Dorsolateral prefrontal cortex (tissue), 120 donors: ENCODE measurements at regions of chr21 and their contacts with region 1.

Region 1: GRCh38 chr21:28025111-28025510 is 967.6 kb downstream of the LTN1 start:
- DNase-seq: no peak
- H3K4me3 ChIP-seq: no peak overlapping the region
- H3K27ac ChIP-seq: no peak overlapping the region
- H3K27me3 ChIP-seq: no peaks in the 10 kb centered on the region
- CTCF ChIP-seq: no peak

Region 2: GRCh38 chr21:27813750-27814149 is 211.4 kb before region 1 on chr21:
- intact Hi-C with region 1: loop called in 1 of 2 experiments (anchors 10 kb)
- DNase-seq: peak; percentile 4 to 93 (median 86)
- H3K4me3 ChIP-seq: peak overlapping the region in 13 of 59 donors; percentile 4 to 43 (median 21)
- H3K27ac ChIP-seq: peak overlapping the region; percentile 23 to 97 (median 88)
- H3K27me3 ChIP-seq: no peaks in the 10 kb centered on the region
- CTCF ChIP-seq: peak in 11 of 56 donors; percentile 7 to 46 (median 25)

Region 3: GRCh38 chr21:28066076-28066475 is 41.0 kb after region 1 on chr21:
- intact Hi-C with region 1: no loop called
- DNase-seq: no peak
- H3K4me3 ChIP-seq: no peak overlapping the region
- H3K27ac ChIP-seq: no peak overlapping the region
- H3K27me3 ChIP-seq: no peaks in the 10 kb centered on the region
- CTCF ChIP-seq: no peak